ENCODE measurements at regions of chr6 and their contacts with region 1.

Region 1: GRCh38 chr6:43506667-43507471 is 3.3 kb downstream of the LRRC73 start:
- DNase-seq: peak; percentile 67 to 94
- H3K4me3 ChIP-seq: no peak overlapping the region
- H3K27ac ChIP-seq: no peak overlapping the region
- H3K4me1 ChIP-seq: peaks cover 0 to 14% (median 8%) of the 10 kb centered on the region in 4 experiments; a peak in 5 of 7 replicates
- H3K27me3 ChIP-seq: peaks cover 0 to 19% (median 15%) of the 10 kb centered on the region in 4 experiments; a peak in 5 of 7 replicates
- CTCF ChIP-seq: peak in 2 of 3 experiments; percentile 97 to 98; a peak in 3 of 4 replicates
- EP300 ChIP-seq: no peak
- POLR2A ChIP-seq: no peak
- RAD21 ChIP-seq: peak; percentile 90 to 93

Region 2: GRCh38 chr6:43355862-43356590 is 150.8 kb before region 1 on chr6:
- CTCF ChIA-PET with region 1: interaction called, 19 read pairs
- POLR2A ChIA-PET with region 1: interaction called, 3 read pairs
- DNase-seq: no peak
- H3K4me3 ChIP-seq: no peak overlapping the region; a peak in 1 of 8 replicates
- H3K27ac ChIP-seq: no peak overlapping the region
- H3K4me1 ChIP-seq: peaks cover 0 to 2% (median 0%) of the 10 kb centered on the region in 4 experiments; a peak in 2 of 7 replicates
- H3K27me3 ChIP-seq: no peaks in the 10 kb centered on the region
- CTCF ChIP-seq: peak; percentile 39 to 74 (median 66)
- EP300 ChIP-seq: no peak
- POLR2A ChIP-seq: no peak
- RAD21 ChIP-seq: peak; percentile 67 to 76

Region 3: GRCh38 chr6:43444036-43444435 is 62.8 kb before region 1 on chr6:
- CTCF ChIA-PET with region 1: interaction called, 495 read pairs
- POLR2A ChIA-PET with region 1: interaction called, 4 read pairs
- DNase-seq: no peak
- H3K4me3 ChIP-seq: no peak overlapping the region
- H3K27ac ChIP-seq: no peak overlapping the region
- H3K4me1 ChIP-seq: no peaks in the 10 kb centered on the region
- H3K27me3 ChIP-seq: no peaks in the 10 kb centered on the region
- CTCF ChIP-seq: no peak
- EP300 ChIP-seq: no peak
- POLR2A ChIP-seq: no peak
- RAD21 ChIP-seq: no peak

Region 4: GRCh38 chr6:43477235-43478007 is 29.4 kb before region 1 on chr6 and contains the start of gene TJAP1:
- CTCF ChIA-PET with region 1: interaction called, 536 read pairs
- POLR2A ChIA-PET with region 1: interaction called, 8 read pairs
- DNase-seq: peak; percentile 67 to 100
- H3K4me3 ChIP-seq: peak within 1 kb of the TSS; percentile 43 to 79 (median 57)
- H3K27ac ChIP-seq: peak within 1 kb of the TSS; percentile 70
- H3K4me1 ChIP-seq: peaks cover 4 to 14% (median 12%) of the 10 kb centered on the region in 4 experiments; a peak in 6 of 7 replicates
- H3K27me3 ChIP-seq: no peaks in the 10 kb centered on the region
- CTCF ChIP-seq: no peak
- EP300 ChIP-seq: peak in 1 of 2 experiments; percentile 69; a peak in 2 of 3 replicates
- POLR2A ChIP-seq: peak; percentile 92 to 97
- RAD21 ChIP-seq: no peak
- total RNA-seq, gene TJAP1: 36.8 and 40.4 TPM in 2 replicates

Region 5: DNA sequence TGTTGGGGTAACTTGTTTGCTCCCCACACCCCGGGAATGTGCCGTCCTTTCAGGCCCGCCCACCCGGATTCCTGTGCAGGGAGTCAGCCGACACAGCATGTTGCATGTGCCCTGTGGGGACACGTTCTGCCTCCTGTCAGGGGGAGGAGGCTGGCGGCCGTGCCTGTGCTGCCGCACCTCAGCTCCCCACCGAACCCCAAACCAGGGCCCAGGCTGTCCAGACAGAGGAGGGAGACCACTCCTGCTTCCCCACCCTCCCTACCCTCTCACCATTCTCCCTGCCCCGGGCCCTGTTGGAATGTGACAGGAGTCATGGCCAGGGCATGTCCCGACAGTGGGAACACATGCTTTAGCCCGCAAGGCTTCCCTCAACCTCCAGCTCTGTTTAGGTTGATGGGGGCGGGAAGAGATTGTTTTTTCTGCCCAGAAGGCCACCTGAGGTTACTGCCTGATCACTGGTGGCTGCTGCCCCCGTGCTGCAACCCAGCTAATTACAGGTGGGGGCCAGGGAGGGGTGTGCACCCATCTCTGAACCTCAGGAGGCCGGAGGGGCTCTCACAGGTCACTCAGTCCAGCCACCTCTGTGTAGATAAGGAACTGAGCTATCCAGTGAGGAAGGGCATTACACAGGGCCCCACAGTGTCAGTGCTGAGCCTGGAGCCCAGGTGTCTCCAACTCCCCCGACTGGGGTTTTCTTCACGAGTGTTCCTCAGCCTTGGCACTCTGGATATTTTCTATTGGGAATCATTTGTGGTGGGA is 10.3 kb before region 1 on chr6:
- CTCF ChIA-PET with region 1: interaction called, 536 read pairs
- POLR2A ChIA-PET with region 1: interaction called, 27 read pairs
- DNase-seq: peak in 1 of 2 experiments; percentile 72
- H3K4me3 ChIP-seq: no peak overlapping the region
- H3K27ac ChIP-seq: no peak overlapping the region
- H3K4me1 ChIP-seq: peaks cover 7 to 19% (median 11%) of the 10 kb centered on the region in 4 experiments
- H3K27me3 ChIP-seq: no peaks in the 10 kb centered on the region
- CTCF ChIP-seq: peak; percentile 71 to 88 (median 79)
- EP300 ChIP-seq: no peak
- POLR2A ChIP-seq: no peak
- RAD21 ChIP-seq: peak; percentile 90 to 91

Region 6: DNA sequence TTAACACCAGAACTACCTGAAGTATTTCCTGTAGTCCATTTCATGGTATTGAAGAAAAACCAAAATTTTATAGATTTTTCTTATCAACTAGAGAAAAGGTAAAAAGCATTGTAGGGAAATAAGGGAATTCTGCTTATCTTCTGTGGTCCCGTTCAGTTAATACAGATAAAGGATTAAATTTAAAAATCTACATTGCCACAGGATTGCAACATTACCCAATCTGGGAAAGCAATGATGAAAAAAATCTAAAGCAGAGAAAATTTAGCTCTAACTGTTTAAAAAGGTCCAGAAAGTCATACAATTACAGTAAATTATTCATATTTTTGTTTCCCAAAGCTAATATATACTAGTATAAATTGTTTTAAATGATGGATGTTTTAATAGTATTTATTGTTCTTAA is 87.1 kb after region 1 on chr6:
- CTCF ChIA-PET with region 1: no interaction called
- POLR2A ChIA-PET with region 1: no interaction called
- DNase-seq: no peak
- H3K4me3 ChIP-seq: no peak overlapping the region
- H3K27ac ChIP-seq: no peak overlapping the region
- H3K4me1 ChIP-seq: no peaks in the 10 kb centered on the region
- H3K27me3 ChIP-seq: no peaks in the 10 kb centered on the region
- CTCF ChIP-seq: no peak
- EP300 ChIP-seq: no peak
- POLR2A ChIP-seq: no peak
- RAD21 ChIP-seq: no peak